ENCODE measurements at regions of chr6 and their contacts with region 1.

Region 1: DNA sequence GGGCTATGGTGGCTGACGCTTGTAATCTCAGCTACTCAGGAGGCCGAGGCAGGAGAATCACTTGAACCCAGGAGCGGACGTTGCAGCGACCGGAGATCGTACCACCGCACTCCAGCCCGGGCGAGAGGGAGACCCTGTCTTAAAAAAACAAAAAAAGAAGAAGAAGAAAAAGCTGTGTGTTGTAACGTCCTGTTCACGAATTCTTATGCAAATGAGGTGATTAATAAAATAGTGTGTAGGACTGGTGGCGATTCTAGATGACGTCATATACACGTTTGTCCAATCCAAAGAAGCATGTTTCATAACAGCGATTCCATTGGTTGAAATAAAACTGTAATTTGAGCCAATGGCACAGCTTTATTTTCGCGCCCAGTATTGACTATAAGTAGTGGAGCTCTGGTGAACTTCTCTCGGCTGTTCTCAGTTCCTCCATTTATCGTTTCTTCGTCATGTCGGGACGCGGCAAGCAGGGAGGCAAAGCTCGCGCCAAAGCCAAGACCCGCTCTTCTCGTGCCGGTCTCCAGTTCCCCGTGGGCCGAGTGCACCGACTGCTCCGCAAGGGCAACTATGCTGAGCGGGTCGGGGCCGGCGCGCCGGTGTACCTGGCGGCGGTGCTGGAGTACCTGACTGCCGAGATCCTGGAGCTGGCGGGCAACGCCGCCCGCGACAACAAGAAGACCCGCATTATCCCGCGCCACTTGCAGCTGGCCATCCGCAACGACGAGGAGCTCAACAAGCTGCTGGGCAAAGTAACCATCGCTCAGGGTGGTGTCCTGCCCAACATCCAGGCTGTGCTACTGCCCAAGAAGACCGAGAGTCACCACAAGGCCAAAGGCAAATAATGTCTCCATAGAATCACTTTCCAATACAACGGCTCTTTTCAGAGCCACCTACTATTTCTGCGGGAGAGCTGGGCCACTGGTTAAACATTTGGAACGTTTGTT is 47.0 kb downstream of the OR2B2 start:
- DNase-seq: peak; percentile 90
- ATAC-seq: peak; percentile 57
- H3K4me3 Mint-ChIP-seq: peak overlapping the region; percentile 87
- H3K27ac Mint-ChIP-seq: peak overlapping the region; percentile 99
- H3K4me1 Mint-ChIP-seq: peaks cover 55% of the 10 kb centered on the region
- H3K27me3 Mint-ChIP-seq: no peaks in the 10 kb centered on the region

Region 2: DNA sequence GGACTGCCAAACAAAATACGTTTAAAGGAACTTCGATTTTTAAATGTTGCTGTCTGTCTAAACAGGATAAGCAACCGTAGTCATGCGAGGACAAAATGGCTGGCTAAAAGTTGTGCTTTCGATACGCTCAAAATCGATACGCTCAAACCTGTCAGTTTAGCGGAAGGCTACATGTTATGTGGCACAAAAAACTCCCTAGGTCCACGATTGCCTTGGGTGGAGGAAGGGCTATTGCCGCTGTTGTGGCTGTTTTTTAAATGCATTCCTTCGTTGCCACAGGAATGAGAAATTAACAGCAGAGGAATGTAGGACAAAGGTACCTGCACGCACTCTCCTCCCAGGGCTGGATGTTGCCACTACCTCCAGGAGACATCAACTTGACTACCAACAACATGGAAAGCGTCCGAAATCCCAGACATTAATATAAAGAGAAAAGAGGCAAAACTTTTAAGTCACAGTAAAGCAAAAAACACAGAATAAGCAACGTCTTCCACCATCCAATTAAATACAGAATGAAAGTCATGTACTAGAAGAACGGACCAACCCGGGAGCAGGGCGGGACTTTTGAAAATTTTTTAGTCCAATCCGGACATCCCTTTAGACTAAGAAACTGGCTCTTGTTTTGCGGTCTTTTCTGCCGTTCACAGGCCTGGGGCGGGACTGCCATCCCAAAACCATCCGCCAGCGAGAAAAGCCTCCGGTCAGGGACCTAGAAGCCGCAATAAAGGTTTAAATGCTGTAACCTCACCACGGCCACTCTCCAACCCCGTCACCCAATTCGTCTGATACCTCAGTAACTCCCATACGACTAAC is 1810.1 kb before region 1 on chr6:
- CTCF ChIA-PET with region 1: no interaction called
- POLR2A ChIA-PET with region 1: interaction called, 12 read pairs
- DNase-seq: peak; percentile 95
- ATAC-seq: peak; percentile 72
- H3K4me3 Mint-ChIP-seq: peak overlapping the region; percentile 87
- H3K27ac Mint-ChIP-seq: peak overlapping the region; percentile 100
- H3K4me1 Mint-ChIP-seq: peaks cover 36% of the 10 kb centered on the region
- H3K27me3 Mint-ChIP-seq: no peaks in the 10 kb centered on the region

Region 3: DNA sequence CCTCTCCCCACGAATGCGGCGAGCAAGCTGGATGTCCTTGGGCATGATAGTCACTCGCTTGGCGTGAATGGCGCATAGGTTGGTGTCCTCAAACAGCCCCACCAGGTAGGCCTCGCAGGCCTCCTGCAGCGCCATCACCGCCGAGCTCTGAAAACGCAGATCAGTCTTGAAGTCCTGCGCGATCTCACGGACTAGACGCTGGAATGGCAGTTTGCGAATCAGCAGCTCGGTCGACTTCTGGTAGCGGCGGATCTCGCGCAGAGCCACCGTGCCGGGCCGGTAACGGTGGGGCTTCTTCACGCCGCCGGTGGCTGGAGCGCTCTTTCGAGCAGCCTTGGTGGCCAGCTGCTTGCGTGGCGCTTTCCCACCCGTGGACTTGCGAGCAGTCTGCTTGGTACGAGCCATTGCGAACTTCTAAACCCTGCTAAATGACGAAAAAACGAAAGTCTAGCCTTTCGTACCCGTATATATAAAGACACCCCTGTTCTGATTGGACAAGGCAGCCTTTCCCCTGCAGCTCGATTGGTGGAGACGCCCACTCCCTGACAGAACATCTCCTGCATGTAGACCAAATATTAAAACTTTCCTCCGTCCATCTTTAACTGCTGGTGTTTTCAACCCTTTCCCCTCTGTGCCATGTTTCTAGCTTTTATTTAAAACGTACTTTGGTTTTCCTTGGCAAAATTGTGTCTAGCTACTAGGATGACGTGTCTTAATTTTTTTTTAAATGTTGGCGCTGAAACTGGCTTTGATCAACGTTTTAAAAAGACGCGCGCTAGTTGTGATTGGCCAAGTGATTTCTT is 1668.1 kb before region 1 on chr6:
- CTCF ChIA-PET with region 1: no interaction called
- POLR2A ChIA-PET with region 1: interaction called, 165 read pairs
- DNase-seq: peak; percentile 92
- ATAC-seq: peak; percentile 43
- H3K4me3 Mint-ChIP-seq: peak overlapping the region; percentile 99
- H3K27ac Mint-ChIP-seq: peak overlapping the region; percentile 93
- H3K4me1 Mint-ChIP-seq: peaks cover 50% of the 10 kb centered on the region
- H3K27me3 Mint-ChIP-seq: no peaks in the 10 kb centered on the region

Region 4: GRCh38 chr6:27132532-27133280 is 732.5 kb before region 1 on chr6:
- CTCF ChIA-PET with region 1: no interaction called
- POLR2A ChIA-PET with region 1: interaction called, 291 read pairs
- DNase-seq: peak; percentile 95
- ATAC-seq: peak; percentile 76
- H3K4me3 Mint-ChIP-seq: no peak overlapping the region
- H3K27ac Mint-ChIP-seq: no peak overlapping the region
- H3K4me1 Mint-ChIP-seq: peaks cover 68% of the 10 kb centered on the region
- H3K27me3 Mint-ChIP-seq: no peaks in the 10 kb centered on the region

Region 5: GRCh38 chr6:27838058-27838944 is 26.9 kb before region 1 on chr6:
- CTCF ChIA-PET with region 1: interaction called, 72 read pairs
- POLR2A ChIA-PET with region 1: interaction called, 2,805 read pairs
- DNase-seq: peak; percentile 92
- ATAC-seq: peak; percentile 78
- H3K4me3 Mint-ChIP-seq: no peak overlapping the region
- H3K27ac Mint-ChIP-seq: no peak overlapping the region
- H3K4me1 Mint-ChIP-seq: peaks cover 33% of the 10 kb centered on the region
- H3K27me3 Mint-ChIP-seq: no peaks in the 10 kb centered on the region

Region 6: DNA sequence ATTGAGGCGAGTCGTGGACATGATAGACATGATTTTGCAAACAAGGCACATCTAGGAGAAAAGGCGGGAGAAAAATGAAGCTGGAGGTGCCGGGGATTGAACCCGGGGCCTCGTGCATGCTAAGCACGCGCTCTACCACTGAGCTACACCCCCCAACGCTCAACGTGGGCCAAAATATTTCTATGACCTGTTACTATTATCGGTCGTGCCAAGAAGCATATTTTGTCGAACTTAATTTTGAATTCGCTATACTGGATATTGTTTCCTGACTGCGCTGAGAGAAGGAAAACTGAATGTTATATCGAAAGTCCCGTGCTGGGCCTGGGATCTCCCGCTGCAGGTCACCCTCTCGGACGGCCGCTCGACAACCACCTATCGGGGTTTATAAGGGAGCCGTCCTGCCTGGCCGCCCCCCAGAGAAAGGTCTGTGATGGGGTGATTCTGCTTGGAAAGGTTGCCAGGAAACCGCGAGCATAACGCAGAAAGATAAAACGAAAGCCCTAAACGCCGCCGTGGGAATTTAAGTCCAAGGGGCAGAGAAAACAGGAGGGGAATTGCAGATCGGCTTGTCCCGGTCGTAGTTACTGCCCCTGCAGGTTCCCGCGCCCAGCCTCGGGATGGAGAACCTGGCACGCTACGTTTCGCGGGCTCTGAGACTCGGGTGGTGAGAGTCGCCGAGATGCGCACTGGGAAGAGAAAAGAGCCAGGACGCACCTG is 998.6 kb after region 1 on chr6:
- CTCF ChIA-PET with region 1: no interaction called
- POLR2A ChIA-PET with region 1: interaction called, 10 read pairs
- DNase-seq: peak; percentile 90
- ATAC-seq: peak; percentile 47
- H3K4me3 Mint-ChIP-seq: peak overlapping the region; percentile 89
- H3K27ac Mint-ChIP-seq: peak overlapping the region; percentile 81
- H3K4me1 Mint-ChIP-seq: peaks cover 53% of the 10 kb centered on the region
- H3K27me3 Mint-ChIP-seq: peaks cover 7% of the 10 kb centered on the region

Measured in activated CD8-positive, alpha-beta T cell treated with anti-CD3 and anti-CD28 coated beads, Interleukin-2, amount 10 ng/mL, durations not matched to agents 7 days and 5 days (primary cell).